Cardiac septum (tissue), 1 donor: ENCODE measurements at regions of chr14 and their contacts with region 1.

Region 1: GRCh38 chr14:55270832-55271565 is at the start of gene FBXO34:
- DNase-seq: peak; percentile 100
- total RNA-seq, gene FBXO34: 17.4 TPM

Region 2: GRCh38 chr14:55254581-55254980 is 16.4 kb before region 1 on chr14:
- intact Hi-C with region 1: no loop called
- DNase-seq: no peak

Region 3: DNA sequence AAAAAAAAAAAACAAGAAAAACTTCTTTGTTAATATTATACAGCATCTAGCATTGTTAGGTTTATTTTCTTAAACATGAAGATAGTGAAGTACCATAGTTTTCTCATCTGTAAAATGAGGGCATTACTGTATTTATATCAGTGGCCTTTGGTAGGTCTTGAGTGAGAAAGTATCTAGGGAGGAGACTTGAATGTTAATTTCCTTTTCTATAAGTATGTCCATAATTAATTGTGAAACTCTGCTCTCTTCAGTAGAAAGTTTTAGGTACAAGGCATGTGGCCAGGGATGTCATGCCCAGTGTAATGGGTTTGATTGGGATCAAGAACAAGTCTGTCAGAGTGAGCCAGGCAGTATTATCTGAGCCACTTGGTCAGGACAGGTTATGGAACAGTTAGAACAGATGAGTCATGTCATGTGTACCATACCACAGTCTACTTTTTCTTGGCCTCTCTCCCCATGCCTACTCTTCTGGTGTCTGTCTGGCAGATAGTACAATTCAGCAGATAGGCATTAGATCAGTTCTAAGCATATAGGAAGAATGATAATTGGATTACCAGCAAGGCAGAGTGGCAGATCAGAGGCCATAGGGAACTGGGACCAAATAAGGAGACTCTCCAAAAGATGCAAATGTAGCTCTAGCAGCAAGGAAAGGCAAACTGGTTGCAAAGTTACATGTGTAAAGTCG is 30.6 kb after region 1 on chr14:
- intact Hi-C with region 1: loop called (anchors 2 kb)
- DNase-seq: no peak

Region 4: DNA sequence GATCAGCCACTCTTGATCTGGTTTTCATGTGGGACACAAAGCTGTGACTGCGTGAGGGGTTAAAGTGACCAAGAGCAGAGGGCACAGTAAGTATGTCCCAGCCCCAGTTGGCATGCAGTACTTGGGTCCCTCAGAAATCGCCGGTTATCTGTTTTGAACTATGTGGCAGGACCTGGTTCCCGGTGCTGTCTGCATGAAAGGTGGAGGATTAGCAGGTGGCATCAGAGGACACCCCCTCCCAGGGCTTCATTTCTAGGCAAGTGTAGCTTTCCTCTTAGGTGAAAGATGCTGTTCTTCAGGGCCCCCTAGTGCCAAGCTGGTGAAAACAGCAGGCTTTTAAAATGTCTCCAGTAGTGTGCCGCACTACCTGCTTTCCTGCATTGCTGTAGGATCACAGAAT is 83.5 kb after region 1 on chr14:
- intact Hi-C with region 1: loop called (anchors 1 kb)
- DNase-seq: no peak

Region 5: DNA sequence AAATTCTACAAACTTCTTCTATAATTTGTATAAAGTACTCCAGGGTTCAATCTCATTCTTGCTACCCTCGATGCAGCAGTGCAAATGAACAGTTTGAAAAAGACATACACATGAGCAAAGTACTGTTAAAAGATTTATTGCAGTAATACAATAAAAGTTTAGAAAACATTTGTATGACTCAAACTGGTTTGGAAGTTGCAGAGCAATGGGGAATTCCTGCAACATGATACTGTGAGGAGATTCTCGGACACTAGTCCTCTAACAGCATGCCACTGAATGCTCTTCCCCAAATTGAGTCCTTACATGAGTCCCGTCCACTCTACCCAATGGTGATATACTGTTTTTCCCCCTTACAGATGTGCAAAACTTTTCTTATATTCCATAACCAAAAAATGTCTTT is 95.3 kb after region 1 on chr14:
- intact Hi-C with region 1: no loop called
- DNase-seq: no peak

Region 6: DNA sequence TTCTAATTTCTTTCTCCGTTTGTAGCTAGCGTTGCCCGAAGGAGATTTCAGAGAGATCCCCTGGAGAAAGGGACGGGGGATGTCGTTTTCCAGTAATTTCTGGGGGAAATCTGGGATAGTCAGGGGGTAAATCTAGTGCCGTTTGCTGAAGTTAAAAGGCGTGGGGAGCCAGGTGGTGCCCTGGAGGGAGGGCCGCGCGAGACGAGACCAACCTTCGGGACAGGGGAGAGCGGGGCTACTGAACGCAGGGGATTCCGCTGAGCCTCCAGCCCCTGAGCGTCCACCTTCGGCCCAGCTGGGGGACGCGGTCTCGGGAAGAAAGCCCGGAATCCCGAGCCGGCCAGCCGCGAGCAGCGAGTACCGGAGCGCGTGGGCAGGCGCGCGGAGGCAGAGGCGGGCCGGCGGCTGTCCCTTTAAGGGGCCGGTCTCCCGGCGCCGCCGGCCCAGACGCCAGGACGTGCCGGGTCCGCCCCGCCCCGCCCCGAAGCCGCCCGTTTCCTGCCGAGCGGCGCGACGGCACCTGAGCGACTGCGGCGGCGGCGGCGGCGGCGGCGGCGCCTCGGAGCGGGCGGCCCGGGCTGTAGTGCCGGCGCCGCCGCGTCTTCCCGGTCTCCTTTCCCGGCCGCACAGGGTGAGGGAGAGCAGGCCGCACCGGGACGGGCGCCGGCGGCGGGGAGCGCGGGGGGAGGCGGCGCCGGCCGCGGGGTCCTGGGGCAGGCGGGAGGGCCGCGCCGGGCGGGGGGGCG is 308.9 kb after region 1 on chr14 and contains the start of gene KTN1:
- intact Hi-C with region 1: loop called (anchors 10 kb)
- DNase-seq: peak; percentile 93
- total RNA-seq, gene KTN1: 247 TPM